K562 (cell line): ENCODE measurements at regions of chr5 and their contacts with region 1.

Region 1: GRCh38 chr5:43389679-43390329 is 22.4 kb downstream of the CCL28 start:
- DNase-seq: peak; percentile 77 to 92 (median 84)
- ATAC-seq: peak; percentile 97
- H3K4me3 ChIP-seq: no peak overlapping the region
- H3K27ac ChIP-seq: no peak overlapping the region
- H3K4me1 ChIP-seq: no peaks in the 10 kb centered on the region
- H3K27me3 ChIP-seq: no peaks in the 10 kb centered on the region
- CTCF ChIP-seq: peak; percentile 88 to 99 (median 96)
- EP300 ChIP-seq: peak; percentile 48; the same call in 1 of the 2 replicates
- POLR2A ChIP-seq: no peak
- RAD21 ChIP-seq: peak; percentile 99

Region 2: DNA sequence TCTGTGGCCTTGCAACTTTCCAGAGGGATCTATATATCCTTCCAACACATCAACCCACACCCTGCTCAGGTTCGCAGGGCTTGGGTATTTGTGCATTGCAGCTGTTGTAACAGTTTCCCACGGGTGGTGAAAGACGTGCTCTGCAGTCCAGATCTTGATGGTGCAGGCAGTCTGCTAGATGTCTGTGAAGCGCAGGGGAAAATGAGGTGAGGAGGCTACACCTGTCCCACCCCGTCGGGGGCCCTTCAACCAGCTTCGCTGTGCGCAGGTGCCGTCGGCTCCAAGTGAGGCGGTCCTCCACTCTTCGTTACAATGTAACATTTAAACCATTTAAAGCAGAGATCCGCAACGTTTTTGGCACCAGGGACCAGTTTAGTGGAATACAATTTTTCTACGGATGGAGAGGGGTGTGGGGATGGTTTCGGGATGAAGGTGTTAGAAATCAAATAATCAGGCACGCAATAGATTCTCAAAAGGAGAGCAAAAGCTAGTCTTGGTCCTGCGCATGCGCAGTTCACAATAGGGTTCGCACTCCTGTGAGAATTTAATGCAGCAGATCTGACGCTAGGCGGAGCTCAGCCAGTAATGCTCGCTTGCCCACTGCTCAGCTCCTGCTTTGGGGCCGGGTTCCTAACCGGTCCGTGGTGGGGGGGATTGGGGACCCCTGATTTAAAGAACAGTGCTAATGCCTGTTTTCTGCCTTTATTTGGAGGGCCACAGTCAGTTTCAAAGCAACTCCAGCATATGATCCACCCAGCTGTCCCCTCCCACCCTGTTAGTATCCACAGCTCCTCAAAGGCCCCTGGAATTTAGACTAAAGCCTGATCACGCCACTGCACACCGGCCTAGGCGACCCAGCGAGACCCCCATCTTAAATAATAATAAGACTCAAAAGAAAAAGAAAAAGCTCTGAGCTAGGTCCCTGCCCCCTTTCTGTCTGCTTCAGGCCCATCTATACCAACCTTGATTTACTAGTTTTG is 481.0 kb before region 1 on chr5:
- CTCF ChIA-PET with region 1: interaction called, 4 read pairs
- POLR2A ChIA-PET with region 1: no interaction called
- in situ Hi-C with region 1: loop called (anchors 10 kb)
- intact Hi-C with region 1: loop called (anchors 1 kb)
- DNase-seq: peak; percentile 85 to 96 (median 88)
- ATAC-seq: peak; percentile 95
- H3K4me3 ChIP-seq: peak overlapping the region; percentile 31
- H3K27ac ChIP-seq: no peak overlapping the region
- H3K4me1 ChIP-seq: peaks cover 3 to 6% of the 10 kb centered on the region in 2 experiments; a peak in 2 of 5 replicates
- H3K27me3 ChIP-seq: peaks cover 3 to 7% of the 10 kb centered on the region in 2 experiments; a peak in 3 of 5 replicates
- CTCF ChIP-seq: peak; percentile 90 to 97 (median 92)
- EP300 ChIP-seq: no peak; the same call in 1 of the 2 replicates
- POLR2A ChIP-seq: no peak
- RAD21 ChIP-seq: peak; percentile 82 to 91

Region 3: DNA sequence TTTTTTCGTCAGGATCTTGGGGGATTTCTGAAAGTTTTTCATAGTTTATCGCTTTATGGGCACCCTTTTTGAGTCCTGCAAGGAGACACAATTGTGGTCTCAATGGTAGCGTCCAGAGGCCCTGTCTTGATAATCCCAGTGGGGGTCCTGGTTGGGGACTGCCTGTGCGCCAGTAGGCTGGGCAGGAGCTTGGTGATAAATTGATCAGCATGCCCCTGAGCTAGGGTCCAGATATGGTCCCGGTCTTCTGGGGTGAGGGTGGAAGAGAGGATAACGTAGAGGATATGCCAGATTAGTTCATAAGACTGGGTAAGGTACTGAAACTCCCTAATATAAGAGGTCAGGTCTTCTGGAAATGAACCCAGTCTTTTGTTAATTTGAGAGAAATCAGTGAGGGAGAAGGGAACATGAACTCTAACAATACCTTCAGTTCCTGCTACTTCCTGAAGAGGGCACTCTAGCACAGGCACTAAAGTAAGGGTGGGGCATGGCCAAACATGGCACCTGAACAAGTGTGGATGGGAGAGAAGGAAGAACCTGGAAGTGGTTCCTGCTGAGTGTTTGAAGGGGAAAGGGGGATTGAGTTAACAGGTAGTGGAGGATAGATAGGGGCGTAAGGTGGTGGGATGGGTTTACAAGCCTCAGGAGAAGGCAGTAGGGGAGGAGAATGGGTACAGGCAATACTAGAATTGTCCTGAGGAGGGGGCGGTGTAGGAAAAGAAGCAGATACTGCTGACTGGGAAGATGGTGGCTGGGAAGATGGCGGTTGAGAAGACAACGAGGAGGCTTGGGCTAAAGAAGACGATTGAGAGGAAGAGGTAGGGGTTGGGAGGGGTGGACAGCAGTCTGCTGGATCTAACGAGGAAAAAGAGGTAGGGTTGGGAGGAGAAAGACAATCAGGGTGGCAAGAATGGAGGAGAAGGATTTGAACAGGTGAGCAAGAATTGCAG is 315.9 kb before region 1 on chr5:
- CTCF ChIA-PET with region 1: interaction called, 11 read pairs
- POLR2A ChIA-PET with region 1: interaction called, 3 read pairs
- in situ Hi-C with region 1: loop called (anchors 10 kb)
- intact Hi-C with region 1: loop called (anchors 1 kb)
- DNase-seq: peak; percentile 63 to 86 (median 68)
- ATAC-seq: peak; percentile 63
- H3K4me3 ChIP-seq: no peak overlapping the region
- H3K27ac ChIP-seq: peak overlapping the region; percentile 90
- H3K4me1 ChIP-seq: peaks cover 17 to 37% of the 10 kb centered on the region in 2 experiments
- H3K27me3 ChIP-seq: no peaks in the 10 kb centered on the region
- CTCF ChIP-seq: peak; percentile 84 to 93 (median 85)
- EP300 ChIP-seq: no peak
- POLR2A ChIP-seq: peak; percentile 53
- RAD21 ChIP-seq: peak; percentile 95

Region 4: DNA sequence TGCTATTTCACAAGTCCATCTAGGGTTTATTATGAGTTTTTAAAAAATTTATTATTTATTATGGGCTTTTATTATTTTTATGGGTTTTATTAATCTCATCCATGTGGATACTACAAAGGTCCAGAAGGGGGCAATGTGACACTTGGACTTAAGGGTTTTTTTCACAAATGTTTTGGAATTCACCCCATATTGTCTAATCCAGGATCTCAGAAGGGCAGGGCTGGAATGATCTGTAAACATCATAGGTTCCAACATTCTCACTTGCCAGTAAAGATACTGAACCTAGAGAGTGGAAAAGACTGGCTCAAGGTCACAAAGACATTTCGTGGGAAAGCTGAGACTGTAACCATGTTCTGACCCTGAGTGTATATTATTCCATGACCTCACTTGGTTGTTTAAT is 162.1 kb before region 1 on chr5:
- CTCF ChIA-PET with region 1: interaction called, 21 read pairs
- POLR2A ChIA-PET with region 1: no interaction called
- in situ Hi-C with region 1: no loop called
- intact Hi-C with region 1: loop called (anchors 1 kb)
- DNase-seq: peak; percentile 41 to 72 (median 49)
- ATAC-seq: peak; percentile 53; the same call in 2 of the 3 replicates
- H3K4me3 ChIP-seq: no peak overlapping the region
- H3K27ac ChIP-seq: no peak overlapping the region
- H3K4me1 ChIP-seq: peaks cover 0 to 16% of the 10 kb centered on the region in 2 experiments; a peak in 3 of 5 replicates
- H3K27me3 ChIP-seq: no peaks in the 10 kb centered on the region
- CTCF ChIP-seq: peak; percentile 54 to 86 (median 57); a peak in 4 of 6 replicates
- EP300 ChIP-seq: no peak
- POLR2A ChIP-seq: no peak
- RAD21 ChIP-seq: peak; percentile 82 to 87

Region 5: DNA sequence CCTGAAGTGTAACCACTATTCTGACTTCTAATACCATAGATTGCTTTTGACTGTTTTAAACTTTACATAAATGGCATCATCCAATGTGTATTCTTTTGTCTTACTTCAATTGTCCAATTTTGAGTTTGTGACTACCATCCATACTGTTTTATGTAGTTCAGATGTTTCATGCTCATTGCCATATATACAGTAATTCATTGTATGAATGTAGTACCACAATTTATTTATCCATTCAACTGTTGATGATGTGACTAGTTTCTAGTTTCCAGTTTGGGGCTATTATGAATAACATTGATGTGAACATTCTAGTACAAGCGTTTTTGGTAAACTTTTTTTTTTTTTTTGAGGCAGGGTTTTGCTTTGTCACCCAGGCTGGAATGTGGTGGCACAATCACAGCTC is 131.7 kb before region 1 on chr5:
- CTCF ChIA-PET with region 1: no interaction called
- POLR2A ChIA-PET with region 1: no interaction called
- in situ Hi-C with region 1: no loop called
- intact Hi-C with region 1: no loop called
- DNase-seq: no peak
- ATAC-seq: no peak
- H3K4me3 ChIP-seq: no peak overlapping the region
- H3K27ac ChIP-seq: no peak overlapping the region
- H3K4me1 ChIP-seq: no peaks in the 10 kb centered on the region
- H3K27me3 ChIP-seq: no peaks in the 10 kb centered on the region; a peak in 1 of 5 replicates
- CTCF ChIP-seq: no peak
- EP300 ChIP-seq: no peak
- POLR2A ChIP-seq: no peak
- RAD21 ChIP-seq: no peak

Region 6: GRCh38 chr5:43305948-43306565 is 83.7 kb before region 1 on chr5:
- CTCF ChIA-PET with region 1: interaction called, 4 read pairs
- POLR2A ChIA-PET with region 1: no interaction called
- in situ Hi-C with region 1: no loop called
- intact Hi-C with region 1: loop called (anchors 1 kb)
- DNase-seq: peak; percentile 41 to 85 (median 44)
- ATAC-seq: peak; percentile 78
- H3K4me3 ChIP-seq: no peak overlapping the region
- H3K27ac ChIP-seq: no peak overlapping the region
- H3K4me1 ChIP-seq: peaks cover 11 to 57% of the 10 kb centered on the region in 2 experiments
- H3K27me3 ChIP-seq: no peaks in the 10 kb centered on the region
- CTCF ChIP-seq: peak; percentile 62 to 83 (median 72); a peak in 5 of 6 replicates
- EP300 ChIP-seq: no peak
- POLR2A ChIP-seq: no peak
- RAD21 ChIP-seq: peak; percentile 83 to 85

Region 7: DNA sequence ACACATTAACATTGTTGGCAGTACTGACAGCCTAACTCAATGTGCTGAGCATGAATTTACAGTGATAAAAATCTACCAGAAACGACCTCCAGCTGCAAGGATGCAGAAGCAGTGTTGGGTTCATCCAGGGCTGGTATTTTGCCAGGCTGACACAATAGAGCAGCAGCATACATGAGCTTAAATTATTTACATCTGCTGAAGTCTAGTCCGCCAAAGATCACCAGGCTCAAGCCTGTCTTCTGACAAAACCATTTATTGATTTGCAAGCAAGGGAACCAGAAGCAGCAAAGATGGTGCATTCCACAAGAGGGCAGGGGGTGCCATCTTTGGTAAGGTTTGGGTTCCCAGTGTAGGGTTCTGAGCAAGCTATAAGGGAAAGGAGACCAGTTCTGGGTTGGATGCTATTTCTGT is 133.9 kb after region 1 on chr5:
- CTCF ChIA-PET with region 1: no interaction called
- POLR2A ChIA-PET with region 1: no interaction called
- in situ Hi-C with region 1: no loop called
- intact Hi-C with region 1: no loop called
- DNase-seq: no peak
- ATAC-seq: 0 out of 3 replicates have a peak, but pooled peaks have one; percentile 10
- H3K4me3 ChIP-seq: no peak overlapping the region
- H3K27ac ChIP-seq: no peak overlapping the region
- H3K4me1 ChIP-seq: 0 out of 5 replicates have a peak, but pooled peaks cover 0 to 2% of the 10 kb centered on the region in 2 experiments
- H3K27me3 ChIP-seq: no peaks in the 10 kb centered on the region
- CTCF ChIP-seq: no peak
- EP300 ChIP-seq: no peak
- POLR2A ChIP-seq: no peak
- RAD21 ChIP-seq: no peak